Adrenal gland (tissue), 19 donors: ENCODE measurements at regions of chr15 and their contacts with region 1.

Region 1: DNA sequence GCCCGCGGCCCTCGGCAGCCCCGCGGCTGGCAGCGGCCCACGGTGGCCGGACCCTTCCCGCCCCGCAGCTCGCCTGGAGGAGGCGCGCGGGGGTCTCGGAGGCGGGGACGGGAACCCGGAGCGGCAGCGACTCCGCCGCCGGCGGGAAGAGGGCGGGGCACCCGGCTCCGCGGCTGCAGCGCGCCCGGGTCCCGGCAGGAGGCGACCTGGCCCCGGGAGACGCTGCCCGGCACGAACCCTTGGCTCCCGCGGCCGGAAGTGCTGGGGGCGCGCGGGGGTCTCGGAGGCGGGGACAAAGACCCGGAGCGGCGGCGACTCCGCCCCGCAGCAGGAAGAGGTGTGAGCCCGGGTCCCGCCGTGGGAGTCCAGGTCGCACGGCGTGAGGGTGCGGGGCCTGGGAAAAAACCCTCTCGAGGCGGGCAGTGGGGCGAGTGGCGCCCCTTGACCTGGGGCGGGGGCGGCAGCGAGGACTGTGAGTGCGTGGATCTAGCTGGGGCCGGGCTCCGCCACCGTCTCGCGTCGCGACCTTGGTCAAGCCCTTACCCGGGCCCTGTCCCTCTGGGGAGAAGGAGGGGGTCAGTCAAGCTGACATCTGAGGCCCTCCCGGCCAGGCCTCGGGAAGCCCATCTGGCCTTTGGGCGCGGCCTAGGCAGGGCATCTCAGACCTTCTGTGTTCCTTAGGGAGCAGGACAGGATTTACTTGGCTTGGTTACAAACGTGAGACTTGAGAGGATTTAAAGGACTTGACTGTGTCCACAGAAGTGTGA is at the start of gene CIB2:
- DNase-seq: peak; percentile 56 to 70 (median 62)
- H3K4me3 ChIP-seq: peak within 1 kb of the TSS in 3 of 4 donors; percentile 57 to 73 (median 71)
- H3K27ac ChIP-seq: peak within 1 kb of the TSS in 3 of 5 donors; percentile 68 to 81 (median 73)
- H3K4me1 ChIP-seq: peaks cover 7 to 9% of the 10 kb centered on the region in 2 donors
- H3K27me3 ChIP-seq: no peaks in the 10 kb centered on the region
- CTCF ChIP-seq: peak; percentile 11 to 90 (median 68)
- POLR2A ChIP-seq: peak; percentile 14 to 50
- total RNA-seq, gene CIB2: 9.1 to 37.8 (median 21.1) TPM

Region 2: GRCh38 chr15:78195735-78196201 is 64.3 kb after region 1 on chr15:
- intact Hi-C with region 1: loop called in 1 of 2 experiments (anchors 5 kb)
- DNase-seq: peak in 5 of 7 donors; percentile 33 to 69 (median 51)
- H3K4me3 ChIP-seq: no peak overlapping the region
- H3K27ac ChIP-seq: no peak overlapping the region
- H3K4me1 ChIP-seq: no peaks in the 10 kb centered on the region
- H3K27me3 ChIP-seq: no peaks in the 10 kb centered on the region
- CTCF ChIP-seq: peak; percentile 49 to 84 (median 78)
- POLR2A ChIP-seq: no peak

Region 3: GRCh38 chr15:78241007-78241406 is 109.5 kb after region 1 on chr15:
- intact Hi-C with region 1: loop called in 1 of 2 experiments (anchors 5 kb)
- DNase-seq: peak; percentile 83 to 95 (median 91)
- H3K4me3 ChIP-seq: no peak overlapping the region
- H3K27ac ChIP-seq: no peak overlapping the region
- H3K4me1 ChIP-seq: peaks cover 5 to 7% of the 10 kb centered on the region in 2 donors
- H3K27me3 ChIP-seq: no peaks in the 10 kb centered on the region
- CTCF ChIP-seq: peak; percentile 77 to 95 (median 88)
- POLR2A ChIP-seq: no peak

Region 4: DNA sequence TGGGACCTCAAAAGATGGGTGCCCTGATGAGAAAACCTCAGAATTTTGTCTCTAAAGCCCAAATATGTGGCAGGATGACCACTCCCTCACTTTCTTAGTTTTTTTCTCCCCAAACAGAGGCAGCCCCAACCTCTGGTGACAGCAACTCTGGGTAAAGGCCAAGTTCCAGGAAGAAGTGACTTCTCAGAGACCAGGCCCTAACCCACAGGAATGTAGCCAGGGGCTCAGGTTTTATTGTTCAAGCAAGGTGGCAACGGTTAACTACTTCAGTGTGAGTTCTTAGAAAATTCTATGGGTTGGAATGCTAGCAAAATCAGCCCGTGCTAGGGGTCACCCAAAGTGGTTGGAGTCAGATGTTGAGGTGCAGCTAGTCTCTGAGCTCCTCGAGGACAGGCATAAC is 127.8 kb after region 1 on chr15:
- intact Hi-C with region 1: no loop called
- DNase-seq: no peak
- H3K4me3 ChIP-seq: no peak overlapping the region
- H3K27ac ChIP-seq: no peak overlapping the region
- H3K4me1 ChIP-seq: peaks cover 0 to 4% of the 10 kb centered on the region in 2 donors
- H3K27me3 ChIP-seq: no peaks in the 10 kb centered on the region
- CTCF ChIP-seq: no peak
- POLR2A ChIP-seq: no peak